ENCODE measurements at regions of chr4 and their contacts with region 1.

Region 1: DNA sequence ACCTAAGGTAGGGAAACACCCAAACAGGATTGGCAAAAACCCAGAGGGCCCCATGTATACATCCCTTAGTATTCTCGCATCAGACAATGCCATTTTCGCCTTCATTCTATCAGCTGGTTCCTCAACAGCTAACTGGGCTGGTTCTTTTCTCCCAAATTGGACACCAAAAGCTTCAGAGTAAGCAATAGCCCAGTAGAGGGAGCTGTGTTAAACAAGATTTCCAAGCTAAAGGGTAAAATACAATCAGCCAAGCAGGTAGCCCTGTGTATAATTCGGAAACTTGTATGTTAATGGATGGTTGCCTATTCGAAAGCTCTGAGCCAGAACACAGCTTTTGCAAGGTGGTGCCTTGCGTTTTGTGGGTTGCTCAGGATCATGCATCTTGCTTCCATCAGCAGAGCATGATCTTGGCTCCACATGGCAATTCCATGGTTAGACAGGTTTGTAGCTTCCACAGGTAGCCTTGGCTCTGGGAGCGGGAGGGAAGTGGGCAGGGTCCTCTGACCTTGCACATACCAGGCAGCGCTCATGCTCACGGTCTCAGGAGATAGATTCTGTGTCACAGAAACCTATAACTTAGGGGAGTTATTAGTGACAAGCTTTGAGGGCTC is 115.2 kb upstream of the LNX1 start:
- DNase-seq: no peak
- H3K4me3 ChIP-seq: no peak overlapping the region
- H3K27ac ChIP-seq: no peak overlapping the region
- H3K4me1 ChIP-seq: peaks cover 0 to 10% (median 3%) of the 10 kb centered on the region in 4 experiments; a peak in 5 of 7 replicates
- H3K27me3 ChIP-seq: no peaks in the 10 kb centered on the region
- CTCF ChIP-seq: peak in 2 of 3 experiments; percentile 63 to 75; a peak in 3 of 4 replicates
- EP300 ChIP-seq: no peak
- POLR2A ChIP-seq: no peak
- RAD21 ChIP-seq: peak; percentile 66 to 76

Region 2: DNA sequence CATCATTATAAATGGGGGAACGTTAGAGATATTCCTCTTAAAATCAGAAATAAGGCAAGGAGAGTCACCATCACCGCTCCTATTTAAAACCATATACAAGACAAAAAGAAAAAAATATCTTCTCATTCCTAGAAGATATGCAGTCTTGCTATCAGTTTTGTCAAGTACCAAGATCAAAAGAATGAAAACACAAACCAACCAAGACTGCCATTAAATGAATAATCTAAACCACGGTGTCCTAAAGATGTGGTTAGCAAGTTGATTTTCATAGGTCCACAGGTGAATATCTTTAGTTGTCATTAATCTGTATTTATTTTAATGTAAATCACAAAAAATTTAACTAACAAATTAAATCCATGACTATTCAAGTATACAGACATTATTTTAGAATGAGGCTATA is 380.0 kb before region 1 on chr4:
- CTCF ChIA-PET with region 1: no interaction called
- POLR2A ChIA-PET with region 1: no interaction called
- DNase-seq: no peak
- H3K4me3 ChIP-seq: no peak overlapping the region
- H3K27ac ChIP-seq: no peak overlapping the region
- H3K4me1 ChIP-seq: peaks cover 0 to 5% (median 4%) of the 10 kb centered on the region in 4 experiments; a peak in 4 of 7 replicates
- H3K27me3 ChIP-seq: no peaks in the 10 kb centered on the region
- CTCF ChIP-seq: no peak
- EP300 ChIP-seq: no peak
- POLR2A ChIP-seq: no peak
- RAD21 ChIP-seq: no peak

Region 3: DNA sequence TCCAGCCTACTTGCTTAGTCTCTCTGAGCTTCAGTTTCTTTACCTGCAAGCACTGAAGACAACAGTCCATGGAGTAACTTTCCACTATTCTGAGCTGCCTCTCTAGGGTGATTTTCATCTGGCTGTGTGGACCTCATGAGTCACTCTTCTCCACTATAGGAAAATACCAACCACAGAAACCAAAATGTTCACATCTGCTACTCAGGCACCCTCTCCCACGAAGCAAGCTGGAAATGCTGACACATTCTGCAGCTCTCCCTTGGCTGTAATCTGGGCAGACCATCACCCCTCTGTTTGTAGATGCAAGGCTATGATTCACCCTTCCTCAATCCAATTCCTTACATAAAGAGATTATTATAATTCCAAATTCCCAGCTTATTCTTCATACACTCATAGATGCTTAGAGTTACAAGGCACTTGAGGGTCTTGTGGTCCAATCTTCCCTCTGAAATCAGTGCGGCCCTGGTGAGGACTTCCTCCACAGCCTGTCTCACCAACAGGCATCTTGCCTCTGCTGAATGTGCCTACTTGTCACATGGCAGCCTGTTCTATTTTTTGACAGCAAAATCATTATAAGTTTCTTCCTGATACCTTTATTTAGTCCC is 18.2 kb before region 1 on chr4:
- CTCF ChIA-PET with region 1: interaction called, 13 read pairs
- POLR2A ChIA-PET with region 1: no interaction called
- DNase-seq: no peak
- H3K4me3 ChIP-seq: no peak overlapping the region
- H3K27ac ChIP-seq: no peak overlapping the region
- H3K4me1 ChIP-seq: no peaks in the 10 kb centered on the region
- H3K27me3 ChIP-seq: no peaks in the 10 kb centered on the region
- CTCF ChIP-seq: no peak
- EP300 ChIP-seq: no peak
- POLR2A ChIP-seq: no peak
- RAD21 ChIP-seq: no peak

Region 4: DNA sequence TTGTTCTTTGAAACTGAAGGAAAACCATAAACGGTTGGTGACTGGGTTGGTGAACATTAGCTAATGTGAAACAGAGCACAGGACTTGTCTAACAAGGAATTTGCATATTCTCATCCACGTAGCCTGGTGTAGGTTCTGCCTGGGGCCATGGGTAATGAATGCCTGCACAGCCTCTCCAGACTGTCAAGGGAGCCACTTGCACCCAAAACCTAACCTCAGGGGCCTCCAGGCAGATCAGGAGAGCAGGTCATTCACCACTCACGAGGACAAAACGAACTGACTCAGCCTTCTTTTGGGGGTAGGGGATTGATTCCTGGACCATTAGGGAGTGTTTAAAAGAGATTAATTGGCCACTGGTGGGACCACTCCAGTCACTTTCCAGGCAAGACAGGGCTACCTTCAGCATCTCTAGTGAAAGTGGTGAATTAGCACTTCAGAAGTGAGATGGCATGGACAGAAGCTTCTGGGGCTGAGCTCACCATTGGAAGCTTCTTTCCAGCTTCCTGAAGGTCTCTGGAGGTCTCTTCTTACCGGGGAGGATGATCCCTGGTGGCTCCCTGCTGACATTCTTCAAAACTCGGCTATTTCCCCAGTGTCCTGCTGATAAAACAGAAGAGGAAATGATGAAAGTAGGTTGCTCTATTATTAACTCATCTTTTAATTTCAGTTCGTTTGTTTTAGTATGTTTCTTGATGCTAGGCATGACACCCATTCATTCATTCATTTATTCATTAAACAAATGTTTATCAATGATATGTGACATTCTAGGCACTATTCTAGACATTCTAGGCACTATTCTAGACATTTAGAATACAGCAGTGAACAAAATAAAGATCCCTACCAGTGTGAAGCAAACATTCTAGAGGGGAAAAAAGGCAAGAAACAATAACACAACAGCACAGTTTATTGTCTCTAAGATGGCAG is 10.7 kb before region 1 on chr4:
- CTCF ChIA-PET with region 1: interaction called, 13 read pairs
- POLR2A ChIA-PET with region 1: no interaction called
- DNase-seq: no peak
- H3K4me3 ChIP-seq: no peak overlapping the region
- H3K27ac ChIP-seq: no peak overlapping the region
- H3K4me1 ChIP-seq: no peaks in the 10 kb centered on the region
- H3K27me3 ChIP-seq: no peaks in the 10 kb centered on the region
- CTCF ChIP-seq: no peak
- EP300 ChIP-seq: no peak
- POLR2A ChIP-seq: no peak
- RAD21 ChIP-seq: no peak

Region 5: GRCh38 chr4:53804719-53805118 is 98.2 kb after region 1 on chr4:
- CTCF ChIA-PET with region 1: interaction called, 17 read pairs
- POLR2A ChIA-PET with region 1: no interaction called
- DNase-seq: peak; percentile 7 to 66
- H3K4me3 ChIP-seq: no peak overlapping the region
- H3K27ac ChIP-seq: no peak overlapping the region
- H3K4me1 ChIP-seq: no peaks in the 10 kb centered on the region
- H3K27me3 ChIP-seq: no peaks in the 10 kb centered on the region
- CTCF ChIP-seq: peak; percentile 65 to 68 (median 66)
- EP300 ChIP-seq: no peak
- POLR2A ChIP-seq: no peak
- RAD21 ChIP-seq: peak; percentile 72 to 78